Activated CD4-positive, alpha-beta memory T cell treated with anti-CD3 and anti-CD28 coated beads for 36 hours (primary cell): ENCODE measurements at regions of chr3 and their contacts with region 1.

Region 1: GRCh38 chr3:56915966-56916586 is 114.3 kb upstream of the ARHGEF3 start:
- DNase-seq: peak; percentile 87
- H3K4me3 Mint-ChIP-seq: peak overlapping the region; percentile 74
- H3K27ac Mint-ChIP-seq: peak overlapping the region; percentile 92
- H3K4me1 Mint-ChIP-seq: peaks cover 69% of the 10 kb centered on the region
- H3K27me3 Mint-ChIP-seq: no peaks in the 10 kb centered on the region

Region 2: GRCh38 chr3:56702490-56703315 is 213.4 kb before region 1 on chr3:
- CTCF ChIA-PET with region 1: interaction called, 4 read pairs
- POLR2A ChIA-PET with region 1: no interaction called
- intact Hi-C with region 1: loop called (anchors 5 kb)
- DNase-seq: peak; percentile 36
- H3K4me3 Mint-ChIP-seq: no peak overlapping the region
- H3K27ac Mint-ChIP-seq: no peak overlapping the region
- H3K4me1 Mint-ChIP-seq: peaks cover 11% of the 10 kb centered on the region
- H3K27me3 Mint-ChIP-seq: no peaks in the 10 kb centered on the region

Region 3: GRCh38 chr3:56758539-56758981 is 157.5 kb before region 1 on chr3:
- CTCF ChIA-PET with region 1: interaction called, 3 read pairs
- POLR2A ChIA-PET with region 1: interaction called, 4 read pairs
- intact Hi-C with region 1: loop called (anchors 2 kb)
- DNase-seq: peak; percentile 62
- H3K4me3 Mint-ChIP-seq: peak overlapping the region; percentile 66
- H3K27ac Mint-ChIP-seq: peak overlapping the region; percentile 86
- H3K4me1 Mint-ChIP-seq: peaks cover 73% of the 10 kb centered on the region
- H3K27me3 Mint-ChIP-seq: no peaks in the 10 kb centered on the region

Region 4: DNA sequence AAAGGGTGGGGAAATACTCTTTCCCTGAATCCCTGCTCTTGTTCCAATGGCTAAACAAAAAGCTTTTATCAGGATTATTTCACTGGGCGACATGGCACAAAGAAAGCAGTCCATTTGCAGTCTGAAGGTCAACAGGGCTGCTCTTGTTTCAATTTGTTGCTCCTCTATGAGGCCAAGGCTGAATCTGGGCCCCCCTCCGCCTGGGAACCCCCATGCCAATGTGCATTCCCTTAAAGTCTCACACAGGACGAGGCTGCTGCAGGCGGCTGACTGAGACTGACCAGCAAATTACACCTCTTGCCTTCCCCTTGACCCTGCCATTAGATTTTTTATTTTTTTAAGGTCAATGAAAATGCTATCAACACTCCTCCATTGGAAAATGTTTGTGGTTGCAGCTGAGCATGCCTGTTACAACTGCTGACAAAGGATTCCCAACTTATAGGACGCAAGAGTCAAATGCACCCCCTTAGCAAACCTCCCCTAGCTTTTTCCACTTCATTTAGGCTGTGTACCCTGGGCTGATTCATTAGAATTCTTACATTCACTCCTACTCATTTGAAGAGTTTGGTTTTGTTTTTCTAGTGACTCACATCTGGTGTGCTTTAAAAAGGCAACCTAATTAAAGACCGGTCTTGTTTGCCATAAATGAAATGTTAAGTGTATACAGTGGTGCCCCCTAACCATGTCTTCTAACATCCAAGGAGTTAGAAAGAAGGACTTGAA is 53.6 kb before region 1 on chr3:
- CTCF ChIA-PET with region 1: interaction called, 4 read pairs
- POLR2A ChIA-PET with region 1: interaction called, 25 read pairs
- intact Hi-C with region 1: loop called (anchors 1 kb)
- DNase-seq: peak; percentile 39
- H3K4me3 Mint-ChIP-seq: peak overlapping the region; percentile 32
- H3K27ac Mint-ChIP-seq: peak overlapping the region; percentile 81
- H3K4me1 Mint-ChIP-seq: peaks cover 73% of the 10 kb centered on the region
- H3K27me3 Mint-ChIP-seq: no peaks in the 10 kb centered on the region

Region 5: DNA sequence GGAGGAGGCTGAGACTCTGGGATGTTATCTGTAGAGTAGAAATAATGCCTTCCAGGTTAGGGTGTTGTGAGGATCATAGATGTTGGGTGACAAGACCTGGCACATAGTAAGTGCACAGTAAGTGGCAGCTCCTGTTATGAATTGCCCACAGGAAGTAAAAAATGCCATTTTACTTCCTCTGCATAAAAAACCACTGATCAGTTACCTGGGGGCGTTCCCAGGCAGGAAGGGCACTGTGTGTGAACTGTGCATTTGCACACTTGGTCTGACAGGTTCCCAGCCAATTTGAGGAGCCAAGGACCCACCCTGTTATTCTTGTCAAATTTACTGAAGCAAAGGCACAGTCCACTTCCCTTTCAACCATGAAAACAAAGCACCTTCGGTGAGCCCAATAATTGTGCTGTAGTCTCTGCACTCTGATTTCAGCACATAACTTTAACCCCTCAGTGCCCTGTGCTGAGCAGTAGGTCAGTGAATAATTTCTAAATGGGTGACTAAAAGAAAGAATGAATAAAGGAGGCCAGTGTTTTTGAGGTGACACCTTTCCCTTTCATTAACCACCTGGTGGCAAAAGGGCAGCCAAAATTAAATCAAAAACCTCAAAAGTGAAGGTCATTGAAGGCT is 28.6 kb before region 1 on chr3:
- CTCF ChIA-PET with region 1: interaction called, 6 read pairs
- POLR2A ChIA-PET with region 1: interaction called, 9 read pairs
- intact Hi-C with region 1: loop called (anchors 2 kb)
- DNase-seq: peak; percentile 63
- H3K4me3 Mint-ChIP-seq: peak overlapping the region; percentile 30
- H3K27ac Mint-ChIP-seq: peak overlapping the region; percentile 66
- H3K4me1 Mint-ChIP-seq: peaks cover 78% of the 10 kb centered on the region
- H3K27me3 Mint-ChIP-seq: no peaks in the 10 kb centered on the region

Region 6: GRCh38 chr3:56942523-56942922 is 26.4 kb after region 1 on chr3:
- CTCF ChIA-PET with region 1: interaction called, 3 read pairs
- POLR2A ChIA-PET with region 1: no interaction called
- intact Hi-C with region 1: loop called (anchors 1 kb)
- DNase-seq: no peak
- H3K4me3 Mint-ChIP-seq: no peak overlapping the region
- H3K27ac Mint-ChIP-seq: peak overlapping the region; percentile 47
- H3K4me1 Mint-ChIP-seq: peaks cover 30% of the 10 kb centered on the region
- H3K27me3 Mint-ChIP-seq: no peaks in the 10 kb centered on the region